ENCODE measurements at regions of chr15 and their contacts with region 1.

Region 1: GRCh38 chr15:74322181-74323076 is 45.0 kb downstream of the CYP11A1 start:
- ATAC-seq: peak in 7 of 8 experiments; percentile 38 to 91 (median 48)
- H3K4me3 ChIP-seq: no peak overlapping the region
- H3K27ac ChIP-seq: no peak overlapping the region
- H3K4me1 ChIP-seq: peaks cover 42% of the 10 kb centered on the region in 2 donors

Region 2: DNA sequence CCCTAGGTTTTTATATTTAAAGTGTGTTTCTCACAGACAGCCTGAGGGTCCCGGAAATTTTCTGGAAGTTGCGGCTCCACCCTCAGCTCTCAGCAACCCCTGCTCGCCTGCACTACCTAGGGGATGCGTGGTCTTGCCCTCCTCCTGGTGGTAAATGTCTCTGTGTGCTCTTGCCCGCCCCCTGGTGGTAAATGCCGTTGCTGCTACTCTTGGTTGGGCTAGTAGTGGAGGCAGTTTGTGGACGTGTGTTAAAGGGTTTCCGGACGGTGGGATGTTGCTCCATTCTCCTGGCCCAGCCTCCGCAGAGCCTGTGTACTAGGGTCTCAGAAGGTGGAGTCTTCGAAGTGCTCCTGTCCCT is 357.7 kb before region 1 on chr15:
- in situ Hi-C with region 1: loop called in 2 of 9 experiments (anchors 25 kb)
- ATAC-seq: peak; percentile 57 to 98 (median 71)
- H3K4me3 ChIP-seq: no peak overlapping the region
- H3K27ac ChIP-seq: peak overlapping the region; percentile 1 to 13
- H3K4me1 ChIP-seq: peaks cover 13 to 16% of the 10 kb centered on the region in 2 donors

Region 3: DNA sequence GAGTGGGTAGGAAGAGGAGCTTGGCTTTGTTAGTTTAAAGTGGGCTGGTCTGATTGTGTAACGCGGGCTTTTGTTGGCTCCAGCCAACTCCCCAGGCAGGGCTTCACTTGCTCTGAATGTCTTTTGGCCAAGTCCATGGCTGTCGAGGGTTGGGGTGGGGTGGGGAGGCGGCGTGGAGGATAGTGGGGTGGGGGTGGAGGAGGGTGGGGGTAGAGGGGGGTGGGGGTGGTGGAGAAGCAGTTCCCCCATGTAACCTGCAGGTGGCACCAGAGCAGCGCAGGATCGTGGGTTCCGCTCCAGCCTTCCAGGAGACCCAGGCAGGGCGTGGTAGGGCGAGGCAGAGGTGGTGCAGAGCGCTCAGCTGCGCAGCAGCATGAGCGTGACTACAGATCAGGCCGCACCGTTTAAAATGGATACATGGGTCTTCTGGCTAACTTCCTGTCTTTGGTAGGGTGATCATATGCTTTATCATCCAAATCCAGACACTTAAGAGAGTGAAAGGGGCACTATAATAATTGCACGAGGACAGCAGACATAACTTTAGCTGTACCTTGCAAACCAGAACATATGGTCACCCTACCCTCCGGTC is 268.4 kb before region 1 on chr15:
- in situ Hi-C with region 1: loop called in 2 of 9 experiments (anchors 10 kb)
- ATAC-seq: peak; percentile 78 to 98 (median 96)
- H3K4me3 ChIP-seq: no peak overlapping the region
- H3K27ac ChIP-seq: no peak overlapping the region
- H3K4me1 ChIP-seq: peaks cover 8 to 12% of the 10 kb centered on the region in 2 donors

Region 4: DNA sequence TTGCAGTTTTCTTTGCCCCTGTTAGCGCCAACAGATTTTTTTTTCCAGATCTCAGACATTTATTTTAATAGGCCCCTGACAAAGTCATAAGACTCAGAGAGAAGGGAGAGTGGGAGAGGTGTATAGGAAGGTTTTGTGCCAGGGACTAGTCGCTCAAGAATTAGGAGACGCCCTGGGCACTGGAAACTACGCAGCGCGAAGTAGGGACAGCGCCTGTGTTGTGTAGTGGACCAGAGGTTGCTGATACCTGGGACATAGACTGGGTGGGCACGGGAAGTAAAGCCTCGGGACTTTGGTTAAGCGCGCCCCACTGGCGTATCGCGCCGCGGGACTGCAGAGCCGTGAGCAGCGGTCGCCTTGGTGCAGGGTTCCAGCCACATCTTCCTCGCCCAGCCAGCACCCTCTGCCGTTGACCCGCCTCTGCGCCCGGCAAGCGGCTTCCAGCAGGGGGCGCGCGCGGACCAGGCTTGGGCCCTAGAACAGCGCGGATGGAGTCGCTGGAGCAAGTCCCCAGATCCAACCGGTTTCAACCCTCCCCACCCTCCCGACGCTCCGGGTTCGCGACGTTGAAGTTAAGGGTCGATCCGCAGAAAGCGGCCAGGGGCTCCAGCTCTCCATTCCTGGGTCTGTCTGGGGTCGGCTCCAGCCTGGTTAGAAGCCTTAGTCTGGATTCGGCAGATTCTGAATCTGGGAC is 195.0 kb before region 1 on chr15:
- in situ Hi-C with region 1: loop called in 5 of 9 experiments (anchors 10 to 25 kb)
- ATAC-seq: peak; percentile 80 to 93 (median 86)
- H3K4me3 ChIP-seq: peak overlapping the region; percentile 22 to 40 (median 36)
- H3K27ac ChIP-seq: peak overlapping the region; percentile 87 to 97
- H3K4me1 ChIP-seq: peaks cover 44 to 55% of the 10 kb centered on the region in 2 donors